WTC11 (cell line): ENCODE measurements at regions of chr5 and their contacts with region 1.

Region 1: DNA sequence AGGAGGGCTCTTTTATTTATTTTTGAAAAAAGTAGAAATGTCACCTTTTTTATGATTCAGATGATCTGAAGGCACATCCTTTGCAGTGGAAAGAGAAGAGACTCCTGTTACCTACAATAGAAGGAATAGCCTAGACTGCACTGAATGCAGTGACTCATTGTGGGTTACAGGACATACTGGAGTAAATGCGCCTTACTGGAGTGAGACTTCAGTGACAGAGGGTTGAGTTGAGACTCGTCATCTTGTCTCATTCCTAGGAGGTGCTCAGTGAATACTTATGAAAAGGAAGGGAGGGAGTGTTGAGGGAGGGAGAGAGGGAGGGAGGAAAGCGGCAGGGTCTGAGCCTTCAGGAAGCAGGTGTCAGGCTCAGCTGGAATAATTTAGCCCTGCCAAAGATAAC is 25.2 kb downstream of the ANKRA2 start:
- DNase-seq: no peak
- ATAC-seq: no peak
- H3K4me3 Mint-ChIP-seq: no peak overlapping the region
- H3K27ac Mint-ChIP-seq: no peak overlapping the region
- H3K4me1 Mint-ChIP-seq: peaks cover 20% of the 10 kb centered on the region
- H3K27me3 Mint-ChIP-seq: no peaks in the 10 kb centered on the region; the same call in 1 of the 2 replicates
- CTCF ChIP-seq: no peak

Region 2: DNA sequence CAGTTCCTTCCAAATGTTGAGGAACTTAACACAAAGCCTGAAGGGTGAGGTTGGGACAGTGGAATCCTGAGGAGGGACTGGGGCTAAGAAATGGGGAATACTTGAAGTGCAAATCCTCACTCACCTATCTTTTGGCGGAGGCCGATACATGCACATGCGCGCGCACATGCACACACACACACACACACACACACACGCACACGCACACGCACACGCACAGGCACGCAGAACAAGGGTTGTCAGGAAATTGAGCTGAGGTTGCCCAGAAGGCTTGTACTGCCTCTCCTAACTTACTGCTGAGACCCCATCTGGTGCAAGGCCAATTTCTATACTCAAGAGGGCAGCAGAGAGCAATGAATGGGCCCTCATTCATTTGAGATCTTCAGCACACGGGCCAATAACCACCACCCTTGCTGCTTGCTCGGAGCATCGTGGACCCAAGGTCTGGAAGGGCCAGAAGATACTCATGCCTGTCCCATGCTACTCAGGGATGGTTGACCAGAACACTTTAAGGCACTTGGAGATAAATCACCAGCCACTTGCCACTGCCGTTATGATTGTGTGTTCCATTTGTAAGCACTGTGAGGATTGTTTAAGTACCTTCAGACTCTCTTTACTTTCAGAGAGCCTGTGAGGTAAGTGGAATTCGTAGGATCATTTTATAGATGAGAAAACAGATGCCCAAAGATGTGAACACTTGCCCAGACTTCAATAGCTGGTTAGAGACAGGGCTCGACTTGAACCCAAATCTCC is 20.5 kb before region 1 on chr5:
- CTCF ChIA-PET with region 1: interaction called, 14 read pairs
- POLR2A ChIA-PET with region 1: interaction called, 4 read pairs
- DNase-seq: peak; percentile 77
- ATAC-seq: peak; percentile 98
- H3K4me3 Mint-ChIP-seq: no peak overlapping the region; the same call in 1 of the 2 replicates
- H3K27ac Mint-ChIP-seq: no peak overlapping the region
- H3K4me1 Mint-ChIP-seq: peaks cover 15% of the 10 kb centered on the region
- H3K27me3 Mint-ChIP-seq: no peaks in the 10 kb centered on the region
- CTCF ChIP-seq: peak; percentile 74

Region 3: GRCh38 chr5:73722231-73722630 is 182.0 kb after region 1 on chr5:
- CTCF ChIA-PET with region 1: no interaction called
- POLR2A ChIA-PET with region 1: no interaction called
- DNase-seq: no peak
- ATAC-seq: no peak
- H3K4me3 Mint-ChIP-seq: no peak overlapping the region
- H3K27ac Mint-ChIP-seq: no peak overlapping the region
- H3K4me1 Mint-ChIP-seq: peaks cover 15% of the 10 kb centered on the region
- H3K27me3 Mint-ChIP-seq: no peaks in the 10 kb centered on the region
- CTCF ChIP-seq: no peak